Prostate gland (tissue), 2 donors: ENCODE measurements at regions of chr11 and their contacts with region 1.

Region 1: DNA sequence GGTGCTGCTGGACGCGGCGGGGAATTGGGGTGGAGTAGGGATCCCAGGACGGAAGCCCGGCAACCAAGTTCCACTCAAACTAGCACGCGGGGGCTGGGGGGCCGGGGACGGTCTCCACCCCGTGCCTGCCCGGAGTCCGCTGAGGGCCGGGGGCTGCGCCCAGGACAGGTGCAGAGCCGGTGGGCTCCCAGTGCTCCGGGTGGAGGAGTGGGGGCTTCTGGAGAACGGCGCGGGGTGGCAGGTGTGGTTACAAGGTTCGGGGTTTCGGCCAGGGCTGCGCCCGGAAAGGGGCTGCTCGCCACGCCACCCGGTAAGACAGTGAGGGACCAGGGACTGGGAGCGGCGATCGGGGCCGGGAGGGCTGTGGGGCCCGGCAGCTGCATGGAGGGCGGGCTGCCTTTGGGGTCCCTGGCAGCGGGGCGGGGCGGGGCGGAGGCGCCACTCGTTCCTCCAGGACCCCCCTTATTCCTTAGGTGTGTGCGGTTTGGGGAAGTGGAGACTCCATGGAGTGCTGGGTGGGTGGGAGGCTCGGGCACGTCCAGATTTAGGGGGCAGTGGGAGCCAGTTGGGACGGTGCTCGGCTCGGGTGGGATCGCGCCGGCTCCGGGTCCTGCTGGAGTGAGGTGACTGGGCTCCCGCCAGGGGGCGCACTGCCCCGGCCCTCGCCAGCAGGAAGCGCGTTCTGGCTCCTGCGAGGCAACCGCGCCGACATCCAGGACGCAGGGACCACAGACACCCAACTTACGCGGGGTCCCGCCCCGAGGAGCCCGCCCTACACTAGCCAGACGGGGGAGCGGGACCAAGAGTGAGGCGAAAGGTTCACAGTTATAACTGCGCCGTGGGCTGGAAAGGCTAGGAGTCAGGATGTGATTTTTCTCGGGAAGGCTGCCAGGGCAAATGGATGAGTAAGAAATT is 868 bp downstream of the TSPAN18 start:
- DNase-seq: peak; percentile 56
- H3K4me3 ChIP-seq: peak overlapping the region; percentile 44 to 50
- H3K27ac ChIP-seq: peak overlapping the region; percentile 48 to 70
- H3K4me1 ChIP-seq: no peaks in the 10 kb centered on the region
- H3K27me3 ChIP-seq: no peaks in the 10 kb centered on the region
- CTCF ChIP-seq: peak; percentile 85 to 91 (median 88)
- POLR2A ChIP-seq: no peak

Region 2: DNA sequence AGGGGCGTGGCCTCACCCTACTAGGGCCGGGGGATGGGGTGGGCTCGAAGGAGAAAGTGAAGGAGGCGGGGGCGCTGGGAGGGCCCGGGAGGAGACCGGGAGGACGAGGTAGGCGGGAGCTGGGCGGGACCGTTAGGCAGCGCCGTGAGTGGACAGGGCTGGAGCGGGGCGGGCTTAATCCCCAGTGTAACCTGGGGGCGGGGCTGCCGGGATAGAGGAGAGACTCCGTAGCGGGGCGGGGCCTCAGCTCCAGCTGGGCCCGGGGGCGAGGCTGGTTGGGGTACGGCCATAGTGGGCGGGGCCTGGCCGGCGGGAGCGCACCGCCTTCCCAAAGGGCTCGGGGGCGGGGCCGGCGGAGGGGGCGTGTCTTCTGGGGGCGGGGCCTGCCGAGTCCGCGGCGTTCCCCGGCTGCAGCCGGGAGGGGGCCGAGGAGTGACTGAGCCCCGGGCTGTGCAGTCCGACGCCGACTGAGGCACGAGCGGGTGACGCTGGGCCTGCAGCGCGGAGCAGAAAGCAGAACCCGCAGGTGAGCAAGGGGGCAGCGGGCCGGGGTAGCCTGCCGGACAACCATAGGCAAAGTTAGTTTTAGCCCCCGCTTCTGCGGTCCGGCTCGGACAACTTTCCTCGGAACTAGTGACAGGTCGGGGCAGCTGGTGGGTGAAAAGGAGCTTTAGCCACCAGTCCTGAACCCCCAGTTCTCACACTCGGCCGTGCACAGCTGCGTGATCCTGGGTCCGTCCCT is 162.2 kb before region 1 on chr11 and contains the start of gene CD82:
- intact Hi-C with region 1: loop called (anchors 10 kb)
- DNase-seq: peak; percentile 100
- H3K4me3 ChIP-seq: peak within 1 kb of the TSS; percentile 51 to 56
- H3K27ac ChIP-seq: peak within 1 kb of the TSS; percentile 96 to 99
- H3K4me1 ChIP-seq: peaks cover 8% of the 10 kb centered on the region
- H3K27me3 ChIP-seq: no peaks in the 10 kb centered on the region
- CTCF ChIP-seq: peak in 3 of 4 experiments; percentile 17 to 52 (median 45)
- POLR2A ChIP-seq: peak; percentile 97
- total RNA-seq, gene CD82: 35.1 to 54.6 TPM

Region 3: GRCh38 chr11:44621140-44621681 is 106.4 kb before region 1 on chr11:
- intact Hi-C with region 1: loop called (anchors 5 kb)
- DNase-seq: peak; percentile 55
- H3K4me3 ChIP-seq: no peak overlapping the region
- H3K27ac ChIP-seq: no peak overlapping the region
- H3K4me1 ChIP-seq: no peaks in the 10 kb centered on the region
- H3K27me3 ChIP-seq: no peaks in the 10 kb centered on the region
- CTCF ChIP-seq: peak; percentile 90 to 96 (median 94)
- POLR2A ChIP-seq: no peak

Region 4: GRCh38 chr11:44760917-44761550 is 33.4 kb after region 1 on chr11:
- intact Hi-C with region 1: loop called (anchors 5 kb)
- DNase-seq: no peak
- H3K4me3 ChIP-seq: no peak overlapping the region
- H3K27ac ChIP-seq: peak overlapping the region in 1 of 2 donors; percentile 37
- H3K4me1 ChIP-seq: no peaks in the 10 kb centered on the region
- H3K27me3 ChIP-seq: no peaks in the 10 kb centered on the region
- CTCF ChIP-seq: no peak
- POLR2A ChIP-seq: no peak

Region 5: GRCh38 chr11:44893846-44894617 is 166.4 kb after region 1 on chr11:
- intact Hi-C with region 1: loop called (anchors 1 kb)
- DNase-seq: peak; percentile 30
- H3K4me3 ChIP-seq: no peak overlapping the region
- H3K27ac ChIP-seq: peak overlapping the region; percentile 24 to 50
- H3K4me1 ChIP-seq: no peaks in the 10 kb centered on the region
- H3K27me3 ChIP-seq: no peaks in the 10 kb centered on the region
- CTCF ChIP-seq: peak; percentile 47 to 76 (median 68)
- POLR2A ChIP-seq: no peak